Prostate gland (tissue), 2 donors: ENCODE measurements at regions of chr5 and their contacts with region 1.

Region 1: GRCh38 chr5:141597394-141597793 is 21.4 kb downstream of the DIAPH1 start:
- DNase-seq: no peak
- H3K4me3 ChIP-seq: no peak overlapping the region
- H3K27ac ChIP-seq: no peak overlapping the region
- H3K4me1 ChIP-seq: no peaks in the 10 kb centered on the region
- H3K27me3 ChIP-seq: no peaks in the 10 kb centered on the region
- CTCF ChIP-seq: no peak
- POLR2A ChIP-seq: no peak

Region 2: GRCh38 chr5:141618804-141619554 is 21.6 kb after region 1 on chr5 and contains the start of gene DIAPH1:
- intact Hi-C with region 1: loop called (anchors 1 kb)
- DNase-seq: peak; percentile 97
- H3K4me3 ChIP-seq: peak within 1 kb of the TSS; percentile 92 to 96
- H3K27ac ChIP-seq: peak within 1 kb of the TSS; percentile 93 to 94
- H3K4me1 ChIP-seq: no peaks in the 10 kb centered on the region
- H3K27me3 ChIP-seq: no peaks in the 10 kb centered on the region
- CTCF ChIP-seq: peak; percentile 97 to 100 (median 100)
- POLR2A ChIP-seq: peak; percentile 95
- total RNA-seq, gene DIAPH1: 34.8 to 57.7 TPM